ENCODE measurements at regions of chr14 and their contacts with region 1.

Region 1: GRCh38 chr14:52824507-52824906 is 33.1 kb upstream of the GNPNAT1 start:
- DNase-seq: no peak
- ATAC-seq: no peak
- H3K4me3 ChIP-seq: no peak overlapping the region
- H3K4me1 ChIP-seq: peaks cover 8% of the 10 kb centered on the region
- CTCF ChIP-seq: no peak

Region 2: DNA sequence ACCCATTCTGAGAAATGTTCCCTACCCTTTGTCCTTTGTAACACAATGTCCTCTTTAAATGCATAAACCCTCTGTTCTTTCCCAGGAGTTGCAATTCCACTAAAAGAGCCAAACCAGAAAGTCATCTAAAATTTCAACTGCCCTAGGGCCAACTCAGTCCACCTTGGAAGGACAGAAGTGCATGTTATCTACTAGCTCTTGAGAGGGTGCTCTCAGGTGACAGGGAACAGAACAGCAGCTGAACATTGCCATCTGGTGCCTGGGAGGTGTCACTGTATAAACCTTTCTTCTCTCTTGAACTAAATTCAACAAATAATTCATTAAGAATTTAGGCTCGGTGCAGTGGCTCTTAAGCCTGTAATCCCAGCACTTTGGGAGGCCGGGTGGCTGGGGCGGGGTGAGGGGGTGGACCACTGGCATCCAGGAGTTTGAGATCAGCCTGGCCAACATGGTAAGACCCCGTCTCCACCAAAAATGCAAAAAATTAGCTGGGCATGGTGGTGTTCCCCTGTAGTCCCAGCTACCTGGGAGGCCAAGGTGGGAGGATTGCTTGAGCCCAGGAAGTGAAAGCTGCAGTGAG is 136.6 kb after region 1 on chr14:
- intact Hi-C with region 1: loop called (anchors 5 kb)
- DNase-seq: peak in 2 of 3 donors; percentile 30 to 54
- ATAC-seq: peak; percentile 69
- H3K4me3 ChIP-seq: no peak overlapping the region
- H3K4me1 ChIP-seq: no peaks in the 10 kb centered on the region
- CTCF ChIP-seq: peak; percentile 22

Region 3: DNA sequence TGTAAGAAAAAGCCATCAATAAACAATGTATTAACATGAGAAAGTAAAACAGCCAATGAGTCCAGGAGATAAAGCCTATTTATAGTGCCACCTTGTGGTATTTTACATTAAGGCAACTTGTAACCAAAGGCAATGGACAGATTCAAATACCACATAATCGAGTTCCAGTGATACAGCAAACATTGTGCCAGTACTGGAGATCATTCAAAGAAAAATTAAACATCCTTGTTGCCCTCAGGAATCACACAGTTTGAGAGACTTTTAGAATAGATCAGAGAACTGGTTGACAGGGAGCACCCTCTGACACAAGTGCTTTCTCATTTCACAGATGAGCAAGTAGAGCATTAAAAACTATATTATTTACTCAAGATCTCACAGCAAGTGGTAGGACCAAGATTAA is 230.5 kb after region 1 on chr14:
- intact Hi-C with region 1: loop called in 1 of 2 experiments (anchors 10 kb)
- DNase-seq: no peak
- ATAC-seq: peak; percentile 60
- H3K4me3 ChIP-seq: no peak overlapping the region
- H3K4me1 ChIP-seq: no peaks in the 10 kb centered on the region
- CTCF ChIP-seq: peak; percentile 32